ENCODE measurements at regions of chr2 and their contacts with region 1.

Region 1: GRCh38 chr2:188291617-188292347 is at the start of gene GULP1:
- DNase-seq: peak; percentile 12 to 83
- H3K4me3 ChIP-seq: peak within 1 kb of the TSS; percentile 83 to 94
- H3K27ac ChIP-seq: peak within 1 kb of the TSS; percentile 97 to 99
- H3K4me1 ChIP-seq: peaks cover 0 to 7% of the 10 kb centered on the region in 2 donors
- H3K27me3 ChIP-seq: no peaks in the 10 kb centered on the region
- CTCF ChIP-seq: peak; percentile 44 to 73 (median 68)
- total RNA-seq, gene GULP1: 67.8 TPM

Region 2: DNA sequence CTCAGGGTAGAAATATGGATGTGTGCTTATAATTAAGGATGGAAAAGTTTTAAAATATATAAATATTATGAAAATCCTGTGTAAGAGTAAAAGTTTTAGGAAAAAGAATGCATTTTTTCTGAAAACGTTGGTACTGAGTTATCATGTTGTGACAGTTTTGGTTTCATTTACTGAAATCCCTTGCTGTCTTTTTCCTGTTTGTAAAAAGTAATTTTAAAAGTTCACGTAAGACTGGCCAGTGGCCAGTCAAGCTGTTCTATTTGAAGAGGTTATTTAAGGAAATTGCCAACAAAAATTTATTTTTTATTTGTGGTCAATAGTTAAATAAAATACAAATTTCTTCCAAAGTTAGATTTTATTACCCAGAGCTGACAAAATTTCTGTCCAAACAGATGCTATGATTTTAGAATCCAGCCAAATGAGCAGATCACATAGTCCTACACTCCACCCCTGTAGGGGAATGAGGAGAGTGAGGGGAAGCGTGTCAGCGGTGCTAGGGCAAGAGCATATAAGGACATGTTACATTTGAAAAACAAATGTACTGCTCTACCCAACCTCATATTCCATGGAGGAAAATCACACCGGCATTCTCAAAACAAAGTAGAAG is 439.7 kb before region 1 on chr2:
- intact Hi-C with region 1: loop called (anchors 5 kb)
- DNase-seq: no peak
- H3K4me3 ChIP-seq: peak overlapping the region; percentile 11 to 35
- H3K27ac ChIP-seq: peak overlapping the region; percentile 54 to 56
- H3K4me1 ChIP-seq: peaks cover 0 to 9% of the 10 kb centered on the region in 2 donors
- H3K27me3 ChIP-seq: no peaks in the 10 kb centered on the region
- CTCF ChIP-seq: no peak

Region 3: DNA sequence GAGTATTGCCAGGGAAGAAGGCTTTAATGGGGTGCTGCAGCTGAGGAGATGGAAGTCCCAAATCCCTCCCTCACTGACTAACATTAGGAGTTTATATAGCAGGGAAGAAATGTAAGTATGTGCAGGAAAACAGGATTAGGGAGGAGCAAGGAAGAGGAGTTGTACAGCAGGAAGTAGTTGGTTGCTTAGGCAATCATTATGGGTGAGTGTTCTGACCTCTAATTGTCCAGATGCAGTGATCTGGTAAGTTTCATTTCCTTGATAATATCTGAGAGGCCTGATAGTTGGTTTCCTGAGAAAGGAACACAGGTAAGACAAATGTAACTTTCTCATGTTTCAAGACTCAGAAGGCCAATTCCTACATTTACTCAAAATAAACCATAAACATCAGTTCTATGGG is 332.0 kb before region 1 on chr2:
- intact Hi-C with region 1: loop called (anchors 5 kb)
- DNase-seq: no peak
- H3K4me3 ChIP-seq: no peak overlapping the region
- H3K27ac ChIP-seq: peak overlapping the region; percentile 1 to 77
- H3K4me1 ChIP-seq: peaks cover 0 to 8% of the 10 kb centered on the region in 2 donors
- H3K27me3 ChIP-seq: no peaks in the 10 kb centered on the region
- CTCF ChIP-seq: no peak

Region 4: DNA sequence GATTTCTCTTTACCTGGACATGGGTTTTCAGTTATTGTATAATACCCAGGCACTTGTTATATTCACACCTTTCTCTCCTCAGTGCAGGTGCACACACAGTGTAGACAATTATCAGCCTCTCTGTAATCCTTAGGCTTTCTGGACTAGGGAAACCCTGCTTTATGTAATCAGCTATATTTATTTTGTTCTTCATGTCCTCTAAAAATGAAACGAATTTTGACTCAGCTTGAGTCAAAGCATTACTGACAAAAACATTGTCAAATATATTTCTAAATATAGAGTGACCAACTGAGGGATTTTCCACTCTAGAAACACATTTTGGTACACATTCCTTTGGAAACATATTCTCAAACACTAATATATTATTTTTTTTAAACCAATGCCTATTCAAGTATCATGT is 144.9 kb before region 1 on chr2:
- intact Hi-C with region 1: no loop called
- DNase-seq: no peak
- H3K4me3 ChIP-seq: no peak overlapping the region
- H3K27ac ChIP-seq: peak overlapping the region in 1 of 2 donors; percentile 50
- H3K4me1 ChIP-seq: no peaks in the 10 kb centered on the region
- H3K27me3 ChIP-seq: no peaks in the 10 kb centered on the region
- CTCF ChIP-seq: no peak

Region 5: GRCh38 chr2:188369365-188369764 is 77.6 kb after region 1 on chr2:
- intact Hi-C with region 1: no loop called
- DNase-seq: no peak
- H3K4me3 ChIP-seq: no peak overlapping the region
- H3K27ac ChIP-seq: no peak overlapping the region
- H3K4me1 ChIP-seq: no peaks in the 10 kb centered on the region
- H3K27me3 ChIP-seq: no peaks in the 10 kb centered on the region
- CTCF ChIP-seq: peak in 2 of 3 experiments; percentile 21 to 43

Region 6: DNA sequence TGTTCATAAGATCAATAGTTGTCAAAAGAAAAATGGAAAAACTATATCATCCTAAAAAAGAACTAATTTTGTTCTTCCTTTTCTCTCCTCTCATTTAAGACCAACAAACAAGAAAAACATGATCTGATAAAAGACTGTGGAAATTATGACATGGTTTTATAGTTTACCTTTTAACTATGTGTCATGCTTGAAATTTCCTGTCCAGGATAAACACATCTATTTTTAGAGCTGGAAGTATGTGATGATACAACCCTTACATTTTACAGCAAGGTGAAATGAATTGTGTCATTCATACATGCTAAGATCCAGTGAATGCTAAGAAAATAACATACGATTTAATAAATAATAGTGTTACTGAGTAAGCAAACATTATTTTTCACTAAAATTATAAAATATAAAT is 89.8 kb after region 1 on chr2:
- intact Hi-C with region 1: loop called (anchors 5 kb)
- DNase-seq: no peak
- H3K4me3 ChIP-seq: no peak overlapping the region
- H3K27ac ChIP-seq: peak overlapping the region; percentile 77 to 85
- H3K4me1 ChIP-seq: peaks cover 0 to 7% of the 10 kb centered on the region in 2 donors
- H3K27me3 ChIP-seq: no peaks in the 10 kb centered on the region
- CTCF ChIP-seq: no peak

Region 7: DNA sequence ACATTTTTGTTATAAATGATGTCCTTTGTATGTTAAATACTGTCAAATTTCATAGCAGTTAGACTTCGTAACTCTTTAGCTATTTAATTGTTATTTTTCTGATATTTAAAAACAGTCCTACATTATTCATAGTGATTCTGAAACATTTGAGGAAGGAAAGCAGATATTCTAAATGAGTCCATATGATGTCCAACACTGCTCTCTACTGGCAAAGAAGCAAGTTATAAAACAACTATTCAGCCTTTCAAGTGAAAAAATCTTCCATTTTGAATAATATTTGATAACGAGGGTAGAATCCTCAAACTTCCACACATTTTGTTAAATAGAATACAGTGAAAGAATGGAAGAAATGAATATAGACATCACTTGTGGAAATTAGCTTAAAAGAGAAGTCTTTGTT is 220.7 kb after region 1 on chr2:
- intact Hi-C with region 1: loop called (anchors 2 kb)
- DNase-seq: no peak
- H3K4me3 ChIP-seq: no peak overlapping the region
- H3K27ac ChIP-seq: no peak overlapping the region
- H3K4me1 ChIP-seq: peaks cover 2 to 7% of the 10 kb centered on the region in 2 donors
- H3K27me3 ChIP-seq: no peaks in the 10 kb centered on the region
- CTCF ChIP-seq: peak; percentile 48 to 60 (median 48)

Region 8: DNA sequence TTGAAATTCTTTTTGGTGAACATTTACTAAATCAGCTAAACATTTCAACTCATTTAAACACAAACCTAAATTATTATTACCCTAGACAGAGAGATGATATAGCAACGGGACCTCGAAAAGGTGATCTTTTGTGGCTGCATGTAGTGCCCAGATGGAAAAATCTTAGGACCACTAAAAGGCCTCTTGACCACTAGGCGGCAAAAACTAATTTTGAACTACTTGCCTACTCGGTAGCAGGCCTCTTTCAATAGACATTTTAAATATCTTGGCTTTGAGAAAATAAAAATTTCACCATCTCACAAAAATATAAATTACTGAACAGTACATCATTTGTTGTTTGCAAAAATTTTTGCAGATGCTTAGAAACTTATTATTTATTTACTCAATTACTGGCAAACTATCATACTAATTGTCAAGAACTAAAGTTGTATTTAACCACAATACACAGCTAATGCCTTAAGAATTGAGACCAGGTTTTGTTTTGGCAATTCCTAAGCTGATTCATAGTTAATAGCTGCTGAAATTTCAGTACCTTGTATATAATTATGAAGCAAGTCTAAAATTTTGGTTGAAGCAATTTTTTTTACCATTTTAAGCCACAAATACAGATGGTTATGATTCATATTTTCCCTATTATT is 691.8 kb after region 1 on chr2:
- intact Hi-C with region 1: loop called (anchors 5 kb)
- DNase-seq: no peak
- H3K4me3 ChIP-seq: peak overlapping the region; percentile 31 to 37
- H3K27ac ChIP-seq: peak overlapping the region; percentile 83 to 85
- H3K4me1 ChIP-seq: peaks cover 3 to 29% of the 10 kb centered on the region in 2 donors
- H3K27me3 ChIP-seq: no peaks in the 10 kb centered on the region
- CTCF ChIP-seq: peak; percentile 6 to 39 (median 16)

Measured in ascending aorta (tissue), 2 donors.